Caco-2 (cell line): ENCODE measurements at regions of chr6 and their contacts with region 1.

Region 1: DNA sequence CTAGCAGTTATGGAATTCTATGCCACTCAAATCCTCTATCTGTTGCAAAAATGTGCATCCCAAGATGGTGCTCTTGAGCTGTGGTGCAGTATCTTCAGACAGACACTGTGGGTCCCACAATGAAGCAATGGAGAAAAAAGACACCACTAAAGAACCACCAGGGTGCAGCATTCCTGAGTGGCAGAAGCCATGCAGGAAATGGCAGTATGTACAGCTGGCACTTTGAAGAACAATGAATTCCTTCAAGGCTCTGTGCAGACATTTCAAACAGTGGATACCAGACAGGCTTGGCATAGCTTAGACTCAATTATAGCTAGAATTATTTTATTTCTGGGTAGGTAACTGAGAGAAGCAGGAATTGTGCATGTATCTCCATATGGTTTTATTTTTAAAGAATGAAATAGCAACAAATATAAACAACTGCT is 24.0 kb upstream of the HDAC2 start:
- DNase-seq: peak; percentile 83 to 84
- H3K4me3 ChIP-seq: no peak overlapping the region
- H3K4me3 Mint-ChIP-seq: peak overlapping the region; percentile 63
- H3K27ac Mint-ChIP-seq: peak overlapping the region; percentile 77
- H3K4me1 ChIP-seq: peaks cover 28% of the 10 kb centered on the region
- H3K4me1 Mint-ChIP-seq: peaks cover 33% of the 10 kb centered on the region
- H3K27me3 ChIP-seq: no peaks in the 10 kb centered on the region
- H3K27me3 Mint-ChIP-seq: no peaks in the 10 kb centered on the region
- CTCF ChIP-seq: peak; percentile 78 to 85

Region 2: GRCh38 chr6:113980937-113981554 is 13.9 kb before region 1 on chr6:
- CTCF ChIA-PET with region 1: interaction called, 12 read pairs
- POLR2A ChIA-PET with region 1: no interaction called
- intact Hi-C with region 1: no loop called
- DNase-seq: peak; percentile 50 to 66
- H3K4me3 ChIP-seq: no peak overlapping the region
- H3K4me3 Mint-ChIP-seq: no peak overlapping the region
- H3K27ac Mint-ChIP-seq: no peak overlapping the region
- H3K4me1 ChIP-seq: no peaks in the 10 kb centered on the region
- H3K4me1 Mint-ChIP-seq: no peaks in the 10 kb centered on the region
- H3K27me3 ChIP-seq: no peaks in the 10 kb centered on the region
- H3K27me3 Mint-ChIP-seq: no peaks in the 10 kb centered on the region
- CTCF ChIP-seq: peak; percentile 76 to 78

Region 3: GRCh38 chr6:114030767-114031166 is 35.8 kb after region 1 on chr6:
- CTCF ChIA-PET with region 1: interaction called, 5 read pairs
- POLR2A ChIA-PET with region 1: no interaction called
- intact Hi-C with region 1: loop called (anchors 1 kb)
- DNase-seq: peak; percentile 71 to 73
- H3K4me3 ChIP-seq: no peak overlapping the region
- H3K4me3 Mint-ChIP-seq: peak overlapping the region; percentile 18
- H3K27ac Mint-ChIP-seq: peak overlapping the region; percentile 55
- H3K4me1 ChIP-seq: peaks cover 43% of the 10 kb centered on the region
- H3K4me1 Mint-ChIP-seq: peaks cover 53% of the 10 kb centered on the region
- H3K27me3 ChIP-seq: no peaks in the 10 kb centered on the region
- H3K27me3 Mint-ChIP-seq: no peaks in the 10 kb centered on the region
- CTCF ChIP-seq: no peak

Region 4: DNA sequence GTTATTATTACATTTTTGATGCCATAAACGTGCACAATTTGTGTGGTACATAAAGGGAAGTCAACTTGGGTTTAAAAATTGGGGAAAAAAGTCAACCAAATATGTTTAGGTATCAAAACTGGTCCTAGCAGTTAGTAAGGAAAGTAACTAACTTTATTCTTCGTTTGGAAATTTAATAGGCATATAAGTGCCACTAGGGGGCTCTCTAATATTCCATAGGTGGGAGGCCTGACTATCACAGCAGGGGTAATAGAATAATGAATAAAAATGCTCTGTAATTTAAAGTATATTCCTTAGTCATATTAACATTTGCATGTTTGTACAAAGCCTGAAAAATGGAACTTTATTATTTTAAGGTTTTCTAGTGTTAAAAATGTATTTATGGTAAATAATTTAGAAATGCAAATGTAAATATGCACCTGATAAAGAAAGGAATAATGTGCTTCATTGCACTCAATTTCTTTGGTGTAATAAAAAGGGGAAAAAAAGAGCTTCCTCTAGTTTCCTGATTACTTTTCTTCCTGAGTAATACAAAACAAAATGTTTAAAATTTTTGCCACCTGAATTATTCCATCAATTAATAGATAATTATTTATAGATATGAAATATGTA is 101.7 kb after region 1 on chr6:
- CTCF ChIA-PET with region 1: no interaction called
- POLR2A ChIA-PET with region 1: no interaction called
- intact Hi-C with region 1: loop called (anchors 1 kb)
- DNase-seq: peak in 1 of 2 experiments; percentile 20
- H3K4me3 ChIP-seq: no peak overlapping the region
- H3K4me3 Mint-ChIP-seq: no peak overlapping the region
- H3K27ac Mint-ChIP-seq: no peak overlapping the region
- H3K4me1 ChIP-seq: no peaks in the 10 kb centered on the region
- H3K4me1 Mint-ChIP-seq: no peaks in the 10 kb centered on the region
- H3K27me3 ChIP-seq: no peaks in the 10 kb centered on the region
- H3K27me3 Mint-ChIP-seq: no peaks in the 10 kb centered on the region
- CTCF ChIP-seq: peak; percentile 67

Region 5: GRCh38 chr6:114167583-114168576 is 172.9 kb after region 1 on chr6:
- CTCF ChIA-PET with region 1: interaction called, 3 read pairs
- POLR2A ChIA-PET with region 1: no interaction called
- intact Hi-C with region 1: loop called (anchors 1 kb)
- DNase-seq: peak; percentile 36 to 38
- H3K4me3 ChIP-seq: no peak overlapping the region
- H3K4me3 Mint-ChIP-seq: peak overlapping the region; percentile 52
- H3K27ac Mint-ChIP-seq: peak overlapping the region; percentile 12
- H3K4me1 ChIP-seq: peaks cover 48% of the 10 kb centered on the region
- H3K4me1 Mint-ChIP-seq: peaks cover 26% of the 10 kb centered on the region
- H3K27me3 ChIP-seq: no peaks in the 10 kb centered on the region
- H3K27me3 Mint-ChIP-seq: no peaks in the 10 kb centered on the region
- CTCF ChIP-seq: no peak

Region 6: DNA sequence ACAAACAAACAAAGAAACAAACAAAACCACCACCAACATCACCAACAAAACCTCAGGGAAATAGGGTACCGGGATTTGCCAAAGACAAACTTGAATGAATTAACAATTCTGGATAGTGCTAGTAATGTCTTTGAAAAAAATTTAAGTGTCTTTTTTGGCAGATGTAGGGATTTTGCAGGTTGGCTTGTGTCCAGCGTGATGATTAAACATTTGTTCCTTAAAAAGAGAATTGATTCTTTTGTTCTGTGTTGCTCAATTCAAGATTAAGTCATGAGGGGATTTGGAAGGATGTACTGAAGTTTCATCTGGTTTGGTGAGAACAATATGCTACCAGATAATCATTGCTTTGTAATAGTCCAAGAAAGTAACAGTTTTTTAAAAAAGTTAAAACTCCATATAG is 473.0 kb after region 1 on chr6:
- CTCF ChIA-PET with region 1: no interaction called
- POLR2A ChIA-PET with region 1: no interaction called
- intact Hi-C with region 1: no loop called
- DNase-seq: no peak
- H3K4me3 ChIP-seq: no peak overlapping the region
- H3K4me3 Mint-ChIP-seq: no peak overlapping the region
- H3K27ac Mint-ChIP-seq: no peak overlapping the region
- H3K4me1 ChIP-seq: no peaks in the 10 kb centered on the region
- H3K4me1 Mint-ChIP-seq: no peaks in the 10 kb centered on the region
- H3K27me3 ChIP-seq: no peaks in the 10 kb centered on the region
- H3K27me3 Mint-ChIP-seq: no peaks in the 10 kb centered on the region
- CTCF ChIP-seq: no peak

Region 7: GRCh38 chr6:114541794-114542193 is 546.9 kb after region 1 on chr6:
- CTCF ChIA-PET with region 1: no interaction called
- POLR2A ChIA-PET with region 1: no interaction called
- intact Hi-C with region 1: loop called (anchors 10 kb)
- DNase-seq: no peak
- H3K4me3 ChIP-seq: no peak overlapping the region
- H3K4me3 Mint-ChIP-seq: no peak overlapping the region
- H3K27ac Mint-ChIP-seq: no peak overlapping the region
- H3K4me1 ChIP-seq: no peaks in the 10 kb centered on the region
- H3K4me1 Mint-ChIP-seq: no peaks in the 10 kb centered on the region
- H3K27me3 ChIP-seq: no peaks in the 10 kb centered on the region
- H3K27me3 Mint-ChIP-seq: no peaks in the 10 kb centered on the region
- CTCF ChIP-seq: no peak